Cardiac septum (tissue), 1 donor: ENCODE measurements at regions of chr16 and their contacts with region 1.

Region 1: GRCh38 chr16:2155091-2156021 is at the start of gene TRAF7:
- DNase-seq: peak; percentile 99
- total RNA-seq, gene TRAF7: 35.7 TPM

Region 2: GRCh38 chr16:2115591-2115973 is 39.8 kb before region 1 on chr16:
- intact Hi-C with region 1: no loop called
- DNase-seq: no peak

Region 3: DNA sequence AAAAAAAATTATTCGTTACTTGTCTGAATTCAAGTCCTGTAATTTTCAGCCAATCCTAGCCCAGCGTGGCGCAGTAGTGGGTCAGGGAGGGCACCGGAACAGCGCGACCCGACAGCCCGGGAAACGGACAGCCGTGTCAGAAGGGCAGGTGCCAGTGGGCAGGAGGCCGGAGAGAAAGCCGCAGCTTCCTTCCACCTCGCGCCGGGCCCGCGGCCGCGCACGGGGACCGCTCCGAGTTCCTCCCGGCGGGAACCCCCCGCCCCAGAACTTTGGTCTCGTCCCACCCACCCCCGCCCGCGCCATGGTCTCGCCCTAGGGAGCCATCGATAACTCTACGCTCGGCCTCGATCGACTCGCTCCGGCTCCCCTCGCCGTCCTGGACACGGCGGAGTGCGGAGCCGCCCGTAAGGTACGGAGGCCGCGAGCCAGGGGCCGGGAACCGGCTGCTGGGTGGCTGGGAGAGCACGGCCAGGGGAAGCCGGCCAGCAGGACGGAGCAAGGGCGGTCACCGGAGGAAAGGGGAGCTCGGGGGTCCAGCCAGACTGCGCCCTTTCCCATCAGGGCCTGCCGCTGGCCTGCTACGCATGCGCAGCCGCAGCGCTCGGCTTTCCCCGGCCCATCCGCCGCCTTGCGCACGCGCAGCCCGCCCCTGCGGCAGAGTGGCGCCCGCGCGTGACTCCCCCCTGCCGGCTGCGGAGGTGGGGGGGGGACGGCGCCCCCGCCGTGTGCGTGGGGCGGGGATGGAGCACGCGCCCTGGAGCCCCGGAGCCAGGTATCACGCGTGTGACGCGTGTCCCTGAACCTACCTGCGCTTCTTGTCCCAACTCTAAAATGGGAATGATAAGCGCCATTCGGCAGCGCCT is 50.0 kb after region 1 on chr16 and contains the start of gene MLST8:
- intact Hi-C with region 1: loop called (anchors 5 kb)
- DNase-seq: peak; percentile 92
- total RNA-seq, gene MLST8: 26.3 TPM